ENCODE measurements at regions of chr16 and their contacts with region 1.

Region 1: GRCh38 chr16:27235055-27235937 is 32.0 kb downstream of the KDM8 start:
- DNase-seq: peak; percentile 40 to 68
- ATAC-seq: peak; percentile 82 to 91; a peak in 5 of 6 replicates
- H3K4me3 ChIP-seq: no peak overlapping the region
- H3K27ac ChIP-seq: peak overlapping the region; percentile 3 to 61; a peak in 3 of 6 replicates
- H3K4me1 ChIP-seq: peaks cover 11% of the 10 kb centered on the region
- CTCF ChIP-seq: peak; percentile 87
- EP300 ChIP-seq: no peak
- POLR2A ChIP-seq: no peak
- RAD21 ChIP-seq: peak; percentile 85 to 88

Region 2: DNA sequence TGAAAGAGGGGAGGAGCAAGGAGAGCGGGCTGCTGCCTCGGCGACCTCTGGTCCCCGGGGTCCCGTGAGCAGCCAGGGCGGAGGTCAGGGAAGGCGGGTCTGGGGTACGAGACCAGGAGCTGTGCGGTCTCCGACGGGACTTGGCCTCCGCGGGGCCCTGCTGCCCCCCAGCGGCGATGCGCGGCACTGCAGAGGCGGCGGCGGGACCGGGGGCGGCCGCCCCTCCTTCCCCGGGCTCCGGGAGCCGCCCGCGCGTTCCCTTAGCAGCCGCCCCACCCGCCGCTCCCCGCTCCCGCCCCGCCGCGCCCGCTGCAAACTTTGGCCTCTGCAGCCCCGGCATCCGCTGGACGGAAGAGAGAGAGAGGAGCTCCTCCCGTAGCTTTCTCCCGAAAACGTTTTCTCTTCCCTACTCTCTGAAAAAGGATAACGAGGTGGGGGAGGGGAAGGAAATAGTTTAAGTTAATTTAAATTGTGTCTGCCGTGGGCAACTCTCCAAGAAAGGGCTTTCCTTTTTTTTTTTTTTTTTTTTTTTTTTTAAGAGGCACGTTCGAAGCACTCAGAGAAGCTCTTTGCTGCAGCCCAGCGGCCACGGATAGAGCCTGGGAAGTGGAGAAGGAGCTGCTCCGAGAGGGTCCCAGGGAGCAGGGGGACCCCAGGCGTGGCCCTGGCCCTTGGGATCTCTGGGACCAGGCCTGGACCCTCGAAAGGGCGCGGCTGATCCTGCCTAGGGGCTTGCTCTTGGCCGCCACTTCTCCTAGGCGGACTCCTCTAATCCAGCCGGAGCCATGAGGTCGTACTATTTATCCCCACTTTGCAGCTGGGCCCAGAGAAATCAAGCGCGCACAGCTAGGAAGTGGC is 125.4 kb before region 1 on chr16:
- CTCF ChIA-PET with region 1: no interaction called
- POLR2A ChIA-PET with region 1: no interaction called
- DNase-seq: peak; percentile 44 to 55
- ATAC-seq: peak; percentile 85 to 88
- H3K4me3 ChIP-seq: peak overlapping the region; percentile 47
- H3K27ac ChIP-seq: peak overlapping the region; percentile 25 to 57; a peak in 2 of 6 replicates
- H3K4me1 ChIP-seq: 0 out of 3 replicates have a peak, but pooled peaks cover 3% of the 10 kb centered on the region
- CTCF ChIP-seq: peak; percentile 91
- EP300 ChIP-seq: no peak
- POLR2A ChIP-seq: no peak
- RAD21 ChIP-seq: peak; percentile 70 to 84

Region 3: DNA sequence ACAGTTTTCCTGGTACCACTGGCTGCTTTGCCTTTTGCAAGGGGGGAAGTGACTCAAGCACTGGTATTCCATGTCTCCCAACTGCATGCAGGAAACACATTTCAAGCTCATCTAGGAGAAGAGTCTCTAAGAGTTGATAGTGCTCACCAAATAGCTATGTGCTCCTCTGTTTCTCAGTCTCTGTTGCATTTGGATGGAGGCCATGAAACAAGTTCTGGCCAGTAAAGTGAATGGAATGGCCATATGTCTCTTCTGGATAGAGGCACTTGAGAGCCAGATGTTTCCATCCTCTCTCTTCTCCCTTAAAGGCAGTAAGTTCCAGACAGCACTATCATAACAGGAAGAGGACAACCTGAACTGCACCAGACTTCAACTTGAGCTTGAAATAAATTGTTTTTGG is 108.0 kb before region 1 on chr16:
- CTCF ChIA-PET with region 1: no interaction called
- POLR2A ChIA-PET with region 1: no interaction called
- DNase-seq: no peak
- ATAC-seq: no peak
- H3K4me3 ChIP-seq: no peak overlapping the region
- H3K27ac ChIP-seq: no peak overlapping the region
- H3K4me1 ChIP-seq: no peaks in the 10 kb centered on the region
- CTCF ChIP-seq: no peak
- EP300 ChIP-seq: no peak
- POLR2A ChIP-seq: no peak
- RAD21 ChIP-seq: no peak

Region 4: DNA sequence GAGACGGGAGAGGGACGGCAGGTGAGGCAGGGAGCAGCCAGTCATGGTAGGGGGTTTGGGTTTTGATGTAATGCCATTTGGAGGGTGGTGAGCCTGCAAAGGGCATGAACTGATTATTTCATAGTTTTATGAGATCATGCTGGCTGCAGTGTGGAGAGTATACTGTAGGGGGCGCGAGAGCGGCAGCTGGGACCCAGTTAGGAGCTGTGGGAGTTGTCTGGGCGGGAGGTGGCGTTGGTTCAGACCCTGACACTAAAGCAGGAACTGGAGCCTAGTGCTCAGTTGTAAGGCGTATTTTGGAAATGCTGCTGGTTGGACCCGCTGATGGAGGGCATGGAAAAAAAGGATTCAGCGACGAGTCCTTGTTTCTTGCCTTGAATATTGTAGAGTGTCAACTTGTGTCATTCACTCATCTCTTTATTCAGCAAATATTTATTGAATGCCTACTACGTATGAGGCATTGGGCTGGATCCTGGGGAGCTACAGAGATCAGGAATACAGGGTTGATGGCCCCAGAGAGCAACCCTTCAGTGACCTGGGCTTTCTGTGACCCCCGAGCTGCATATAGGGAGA is 55.7 kb before region 1 on chr16:
- CTCF ChIA-PET with region 1: interaction called, 20 read pairs
- POLR2A ChIA-PET with region 1: no interaction called
- DNase-seq: peak; percentile 58 to 69
- ATAC-seq: peak; percentile 54 to 83; a peak in 4 of 6 replicates
- H3K4me3 ChIP-seq: no peak overlapping the region
- H3K27ac ChIP-seq: no peak overlapping the region
- H3K4me1 ChIP-seq: peaks cover 8% of the 10 kb centered on the region
- CTCF ChIP-seq: peak; percentile 55
- EP300 ChIP-seq: no peak
- POLR2A ChIP-seq: no peak
- RAD21 ChIP-seq: peak; percentile 47 to 73

Region 5: DNA sequence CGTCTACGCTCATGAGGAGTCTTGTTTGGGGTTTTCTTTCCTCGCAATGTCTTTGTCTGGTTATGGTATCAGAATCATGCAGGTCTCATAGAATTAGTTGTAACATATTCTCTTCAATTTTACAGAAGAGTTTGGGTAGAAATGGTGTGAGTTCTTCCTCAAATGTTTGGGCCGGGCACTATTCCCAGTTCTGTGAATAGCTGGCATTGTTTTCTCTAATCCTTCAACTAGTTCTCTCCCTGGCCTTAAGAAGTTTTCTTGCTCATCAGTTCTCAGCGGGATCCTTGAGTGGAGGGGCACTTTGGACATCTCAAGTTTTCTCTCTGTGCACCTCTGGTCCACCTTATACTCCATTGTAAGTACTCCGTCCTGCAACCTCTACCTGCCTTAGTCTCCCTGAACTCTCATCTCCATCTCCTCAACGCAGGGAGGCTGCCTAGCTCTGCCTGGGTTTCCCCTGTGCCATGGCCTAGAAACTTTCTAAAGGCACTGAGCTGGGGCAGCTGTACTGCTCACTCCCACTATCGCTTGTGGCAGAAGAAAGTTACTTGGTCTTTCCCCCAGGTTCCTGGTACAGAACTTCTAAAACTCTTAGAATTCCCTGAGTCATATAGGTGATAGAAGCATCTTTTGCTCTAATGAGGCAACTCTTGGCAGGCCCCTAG is 16.4 kb after region 1 on chr16:
- CTCF ChIA-PET with region 1: interaction called, 45 read pairs
- POLR2A ChIA-PET with region 1: no interaction called
- DNase-seq: no peak
- ATAC-seq: no peak
- H3K4me3 ChIP-seq: no peak overlapping the region
- H3K27ac ChIP-seq: no peak overlapping the region
- H3K4me1 ChIP-seq: peaks cover 22% of the 10 kb centered on the region
- CTCF ChIP-seq: no peak
- EP300 ChIP-seq: no peak
- POLR2A ChIP-seq: no peak
- RAD21 ChIP-seq: no peak

Region 6: GRCh38 chr16:27298132-27298531 is 62.8 kb after region 1 on chr16:
- CTCF ChIA-PET with region 1: interaction called, 16 read pairs
- POLR2A ChIA-PET with region 1: no interaction called
- DNase-seq: no peak
- ATAC-seq: no peak
- H3K4me3 ChIP-seq: no peak overlapping the region
- H3K27ac ChIP-seq: no peak overlapping the region
- H3K4me1 ChIP-seq: no peaks in the 10 kb centered on the region
- CTCF ChIP-seq: no peak
- EP300 ChIP-seq: no peak
- POLR2A ChIP-seq: no peak
- RAD21 ChIP-seq: no peak

Region 7: DNA sequence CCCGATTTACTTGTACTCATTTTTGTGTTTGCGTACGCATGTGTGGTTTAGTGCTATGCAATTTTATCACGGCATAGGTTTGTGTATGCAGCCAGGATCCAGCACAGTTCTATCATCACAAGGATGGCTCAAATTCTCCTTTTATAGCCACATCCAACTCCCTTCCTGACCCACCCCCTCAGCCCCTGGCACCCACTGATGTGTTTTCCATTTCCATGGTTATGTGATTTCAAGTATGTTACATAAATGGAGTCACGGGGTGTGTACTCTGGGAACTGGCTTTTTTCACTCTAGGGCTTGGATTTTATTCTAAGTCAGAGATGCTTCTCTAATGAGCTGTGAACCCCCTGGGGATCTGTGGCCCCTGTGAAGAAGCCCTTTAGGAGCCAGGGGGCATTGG is 95.2 kb after region 1 on chr16:
- CTCF ChIA-PET with region 1: interaction called, 14 read pairs
- POLR2A ChIA-PET with region 1: no interaction called
- DNase-seq: peak in 1 of 2 experiments; percentile 17
- ATAC-seq: no peak
- H3K4me3 ChIP-seq: no peak overlapping the region
- H3K27ac ChIP-seq: no peak overlapping the region
- H3K4me1 ChIP-seq: peaks cover 28% of the 10 kb centered on the region
- CTCF ChIP-seq: no peak
- EP300 ChIP-seq: no peak
- POLR2A ChIP-seq: no peak
- RAD21 ChIP-seq: no peak

Region 8: DNA sequence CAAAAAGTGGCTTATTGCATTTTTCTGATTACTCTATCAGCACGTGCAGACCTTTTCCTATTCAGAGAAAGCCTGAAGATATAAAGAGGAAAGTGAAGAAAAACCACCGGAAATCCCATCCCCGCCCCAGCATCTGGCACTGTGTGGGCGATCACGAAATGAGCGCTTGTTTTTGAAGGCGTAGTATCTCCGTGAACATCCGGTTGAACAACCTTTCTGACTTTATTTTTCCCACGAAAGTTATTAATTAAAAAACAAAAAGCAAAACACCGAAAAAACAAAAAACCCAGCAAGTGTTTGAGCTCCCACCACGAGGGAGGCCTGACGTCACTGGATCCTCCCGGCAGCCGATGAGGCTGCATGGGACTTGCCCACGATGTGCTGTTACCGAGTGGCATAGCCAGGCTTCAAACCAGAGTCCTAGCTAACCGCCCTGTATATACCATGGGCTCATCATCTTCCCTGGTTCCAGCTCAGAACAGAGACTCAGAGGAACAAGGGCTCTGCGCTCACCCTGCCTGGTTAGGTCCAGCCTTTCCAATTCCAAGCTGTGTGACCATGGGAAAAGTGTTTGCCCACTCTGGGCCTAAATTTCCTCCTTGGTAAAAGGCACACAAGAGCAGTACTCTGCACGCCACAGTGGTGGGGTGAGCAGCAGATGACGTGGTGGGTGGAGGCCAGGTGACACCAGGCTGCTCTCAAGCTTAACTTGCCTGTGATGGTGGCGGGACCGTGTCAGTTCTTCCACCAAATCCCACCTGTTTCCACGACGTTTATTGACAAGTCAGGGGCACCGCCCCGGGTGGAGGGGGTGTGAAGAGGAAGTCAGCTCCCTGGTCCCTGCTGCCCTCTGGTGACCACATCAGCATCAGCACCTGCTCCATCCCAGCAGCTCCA is 132.4 kb after region 1 on chr16:
- CTCF ChIA-PET with region 1: interaction called, 291 read pairs
- POLR2A ChIA-PET with region 1: no interaction called
- DNase-seq: peak; percentile 74 to 87
- ATAC-seq: peak; percentile 69 to 77
- H3K4me3 ChIP-seq: no peak overlapping the region
- H3K27ac ChIP-seq: peak overlapping the region; percentile 25 to 83; a peak in 4 of 6 replicates
- H3K4me1 ChIP-seq: peaks cover 40% of the 10 kb centered on the region
- CTCF ChIP-seq: peak; percentile 91
- EP300 ChIP-seq: no peak
- POLR2A ChIP-seq: no peak
- RAD21 ChIP-seq: peak; percentile 93 to 97